CD4-positive, alpha-beta T cell (primary cell): ENCODE measurements at regions of chr11 and their contacts with region 1.

Region 1: DNA sequence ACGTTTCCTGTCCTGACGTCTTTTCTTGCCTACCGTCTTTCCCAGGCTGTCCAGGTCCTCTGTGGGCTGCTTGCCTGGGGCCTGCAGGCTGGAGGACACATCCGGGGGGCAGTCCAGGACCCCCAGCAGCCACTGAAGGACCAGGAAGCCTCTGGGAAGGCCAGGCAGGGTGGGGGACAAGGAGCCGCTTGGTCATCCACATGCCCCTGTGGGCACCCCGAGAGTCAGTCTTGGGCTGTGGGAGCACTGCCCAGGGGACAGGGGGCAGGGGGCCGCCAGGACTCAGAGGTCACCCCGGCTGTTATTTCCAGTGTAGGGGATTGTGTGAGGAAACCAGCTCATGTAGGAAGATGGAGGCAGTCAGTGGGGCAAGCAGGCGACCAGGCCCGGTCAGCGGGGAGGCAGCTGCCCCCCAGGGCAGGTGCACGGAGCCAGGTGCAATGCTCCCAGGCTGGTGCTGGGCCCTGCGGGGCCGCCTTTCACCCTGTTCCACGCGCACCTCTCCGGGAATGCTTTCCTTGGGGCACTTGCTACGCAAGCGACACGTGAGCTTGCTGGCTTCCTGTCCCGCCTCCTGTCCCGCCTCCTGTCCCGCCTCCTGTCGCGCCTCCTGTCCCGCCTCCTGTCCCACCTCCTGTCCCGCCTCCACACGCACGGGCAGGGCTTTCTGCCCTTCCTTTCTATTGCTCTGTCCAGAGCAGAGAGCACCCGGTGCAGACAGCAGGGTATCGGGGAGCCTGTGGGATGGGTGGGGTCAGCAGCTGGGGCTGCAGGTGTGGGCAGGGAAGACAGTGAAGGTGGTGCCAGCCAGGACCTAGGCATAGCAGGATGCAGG is 39.5 kb downstream of the MUC5B start:
- DNase-seq: peak; percentile 79 to 95 (median 86)
- ATAC-seq: peak; percentile 90
- H3K4me3 ChIP-seq: peak overlapping the region; percentile 62
- H3K4me3 Mint-ChIP-seq: peak overlapping the region; percentile 86
- H3K27ac ChIP-seq: peak overlapping the region; percentile 75 to 80
- H3K27ac Mint-ChIP-seq: peak overlapping the region; percentile 86
- H3K4me1 ChIP-seq: peaks cover 22% of the 10 kb centered on the region
- H3K4me1 Mint-ChIP-seq: peaks cover 12% of the 10 kb centered on the region
- H3K27me3 ChIP-seq: no peaks in the 10 kb centered on the region
- H3K27me3 Mint-ChIP-seq: no peaks in the 10 kb centered on the region
- CTCF ChIP-seq: no peak

Region 2: DNA sequence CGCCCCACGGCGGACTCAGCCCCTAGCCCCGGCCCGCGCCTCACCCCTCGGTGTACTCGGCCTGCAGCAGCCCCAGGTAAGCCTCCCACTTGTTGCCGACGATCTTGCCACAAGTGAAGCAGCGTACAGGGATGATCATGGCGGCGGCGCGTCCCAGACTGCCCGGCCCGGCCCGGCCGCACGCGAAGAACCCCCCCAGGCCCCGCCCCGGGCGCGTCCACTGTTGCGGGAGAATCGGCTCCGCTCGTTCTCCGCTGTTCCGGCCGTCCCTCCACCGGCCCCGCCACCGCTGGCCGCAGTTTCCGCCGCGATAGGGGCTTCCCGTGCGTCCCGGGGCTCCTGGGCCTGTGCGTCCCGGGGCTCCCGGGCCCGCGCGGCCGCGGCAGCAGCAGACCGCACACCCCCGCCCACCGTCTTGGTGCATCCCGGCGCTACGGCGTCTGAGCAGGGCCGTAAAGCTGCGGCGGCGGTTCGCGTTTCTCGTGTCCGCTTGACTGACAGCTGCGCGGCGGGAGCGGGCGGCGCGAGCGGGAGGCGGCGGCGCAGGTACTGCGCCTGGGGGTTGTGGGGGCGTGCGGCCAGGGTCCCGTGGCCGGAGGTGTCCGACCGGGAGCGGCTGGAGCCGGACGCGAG is 419.9 kb before region 1 on chr11 and contains the starts of genes POLR2L and TSPAN4:
- CTCF ChIA-PET with region 1: no interaction called
- POLR2A ChIA-PET with region 1: no interaction called
- intact Hi-C with region 1: loop called in 1 of 2 experiments (anchors 10 kb)
- DNase-seq: peak; percentile 76 to 94 (median 86)
- ATAC-seq: peak; percentile 83
- H3K4me3 ChIP-seq: peak within 1 kb of the TSS; percentile 91
- H3K4me3 Mint-ChIP-seq: peak within 1 kb of the TSS; percentile 87
- H3K27ac ChIP-seq: peak within 1 kb of the TSS in 1 of 2 donors; percentile 50
- H3K27ac Mint-ChIP-seq: peak within 1 kb of the TSS; percentile 55
- H3K4me1 ChIP-seq: peaks cover 43% of the 10 kb centered on the region
- H3K4me1 Mint-ChIP-seq: peaks cover 6% of the 10 kb centered on the region
- H3K27me3 ChIP-seq: peaks cover 0 to 2% of the 10 kb centered on the region in 2 experiments
- H3K27me3 Mint-ChIP-seq: no peaks in the 10 kb centered on the region
- CTCF ChIP-seq: no peak
- total RNA-seq, gene POLR2L: 19.6 to 19.8 TPM
- total RNA-seq, gene TSPAN4: 1.6 to 2.0 TPM

Region 3: GRCh38 chr11:1309498-1310317 is 47.3 kb after region 1 on chr11 and contains the start of gene TOLLIP:
- CTCF ChIA-PET with region 1: no interaction called
- POLR2A ChIA-PET with region 1: interaction called, 21 read pairs
- intact Hi-C with region 1: loop called in 1 of 2 experiments (anchors 1 kb)
- DNase-seq: peak; percentile 93 to 99 (median 98)
- ATAC-seq: peak; percentile 81
- H3K4me3 ChIP-seq: peak within 1 kb of the TSS; percentile 85
- H3K4me3 Mint-ChIP-seq: peak within 1 kb of the TSS; percentile 87
- H3K27ac ChIP-seq: peak within 1 kb of the TSS; percentile 82 to 90
- H3K27ac Mint-ChIP-seq: peak within 1 kb of the TSS; percentile 86
- H3K4me1 ChIP-seq: peaks cover 58% of the 10 kb centered on the region
- H3K4me1 Mint-ChIP-seq: peaks cover 49% of the 10 kb centered on the region
- H3K27me3 ChIP-seq: no peaks in the 10 kb centered on the region
- H3K27me3 Mint-ChIP-seq: no peaks in the 10 kb centered on the region
- CTCF ChIP-seq: peak; percentile 27
- total RNA-seq, gene TOLLIP: 38.9 to 41.0 TPM

Region 4: DNA sequence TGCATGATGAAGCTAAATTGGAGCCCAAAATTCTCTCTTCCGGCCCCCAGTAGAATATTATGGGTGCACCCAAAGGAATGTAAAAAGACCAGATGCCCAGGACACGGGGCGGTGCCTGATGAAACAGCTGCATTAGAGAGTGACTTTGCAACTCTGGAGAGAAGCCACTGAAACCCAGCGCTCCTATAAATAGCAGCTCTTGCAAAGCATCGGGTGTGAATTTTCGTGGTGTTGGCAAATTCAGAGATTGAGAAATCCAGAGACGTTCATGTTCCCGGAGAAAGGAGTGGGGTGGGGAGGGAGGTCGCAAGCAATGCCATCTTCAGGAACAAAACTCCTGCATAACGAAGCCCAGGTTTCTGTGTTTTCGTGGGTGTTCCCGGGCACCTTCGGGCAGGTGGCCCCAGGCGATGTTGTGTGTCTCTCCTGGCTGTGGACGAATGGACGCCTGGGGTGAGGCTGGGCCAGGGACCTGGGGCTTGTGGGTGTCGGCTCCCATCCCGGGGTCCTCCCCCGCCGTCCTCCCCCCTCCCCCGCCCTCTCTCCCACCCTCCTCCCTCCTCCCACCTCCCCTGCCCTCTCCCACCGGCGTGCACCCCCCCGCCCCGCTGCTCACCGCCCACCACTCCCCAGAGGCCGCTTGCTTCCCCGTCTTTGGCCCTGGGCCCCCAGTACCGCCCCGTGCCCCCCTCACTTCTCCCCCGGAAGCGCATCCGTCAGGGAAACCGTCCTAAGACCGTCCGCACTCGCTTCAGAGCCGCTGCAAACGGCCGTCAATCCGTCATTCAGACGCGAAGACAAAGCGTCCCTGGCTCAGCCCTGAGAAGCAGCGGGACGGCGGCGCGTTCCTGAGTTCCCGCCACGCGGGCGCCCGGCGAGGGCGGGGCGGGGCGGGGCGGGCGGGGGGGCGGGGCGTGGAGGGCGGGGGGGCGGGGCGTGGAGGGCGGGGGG is 73.7 kb after region 1 on chr11:
- CTCF ChIA-PET with region 1: no interaction called
- POLR2A ChIA-PET with region 1: no interaction called
- intact Hi-C with region 1: loop called in 1 of 2 experiments (anchors 2 kb)
- DNase-seq: peak in 13 of 14 experiments; percentile 32 to 85 (median 59)
- ATAC-seq: peak; percentile 56
- H3K4me3 ChIP-seq: peak overlapping the region; percentile 59
- H3K4me3 Mint-ChIP-seq: peak overlapping the region; percentile 93
- H3K27ac ChIP-seq: no peak overlapping the region
- H3K27ac Mint-ChIP-seq: peak overlapping the region; percentile 85
- H3K4me1 ChIP-seq: peaks cover 14% of the 10 kb centered on the region
- H3K4me1 Mint-ChIP-seq: peaks cover 22% of the 10 kb centered on the region
- H3K27me3 ChIP-seq: no peaks in the 10 kb centered on the region
- H3K27me3 Mint-ChIP-seq: no peaks in the 10 kb centered on the region
- CTCF ChIP-seq: no peak

Region 5: DNA sequence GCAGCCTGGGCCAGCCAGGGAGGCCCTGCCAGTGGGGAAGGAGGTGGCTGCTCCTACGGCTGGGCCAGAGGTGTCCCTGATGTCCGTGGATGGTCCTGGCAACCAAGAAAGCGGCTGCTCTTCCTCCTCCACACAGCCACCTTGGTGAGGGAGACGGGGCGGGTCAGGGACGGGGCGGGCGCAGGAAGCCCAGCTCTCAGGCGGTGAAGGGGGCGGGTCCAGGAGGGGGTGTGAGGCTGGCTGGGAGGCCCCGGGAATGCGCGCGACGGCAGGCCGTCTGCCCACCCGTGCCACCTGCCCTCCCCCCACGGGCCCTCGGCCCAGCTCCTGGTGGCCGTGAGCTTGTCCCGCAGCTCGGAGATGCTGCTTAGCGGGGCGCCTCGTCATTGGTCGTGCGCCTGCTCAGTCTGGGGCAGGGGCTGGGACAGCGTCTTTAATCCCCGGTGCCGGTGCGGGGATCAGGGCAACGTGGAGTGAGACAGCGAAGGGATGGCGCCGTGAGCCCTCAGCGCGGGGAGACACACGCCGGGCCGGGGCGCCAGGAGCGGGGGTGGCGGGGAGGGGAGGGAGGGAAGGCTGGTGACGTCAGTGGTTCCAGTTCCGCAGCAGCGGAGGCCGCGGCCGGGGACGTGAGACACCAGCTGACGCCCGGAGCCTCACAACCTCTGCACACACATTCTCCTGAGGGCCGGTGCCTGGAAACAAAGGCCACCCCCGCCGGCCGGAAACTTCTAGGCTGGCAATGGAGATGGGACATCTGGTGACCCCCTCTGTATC is 120.6 kb after region 1 on chr11:
- CTCF ChIA-PET with region 1: no interaction called
- POLR2A ChIA-PET with region 1: no interaction called
- intact Hi-C with region 1: loop called in 1 of 2 experiments (anchors 1 kb)
- DNase-seq: peak; percentile 54 to 92 (median 71)
- ATAC-seq: peak; percentile 77
- H3K4me3 ChIP-seq: peak overlapping the region; percentile 63
- H3K4me3 Mint-ChIP-seq: peak overlapping the region; percentile 87
- H3K27ac ChIP-seq: peak overlapping the region; percentile 74 to 85
- H3K27ac Mint-ChIP-seq: peak overlapping the region; percentile 78
- H3K4me1 ChIP-seq: peaks cover 20% of the 10 kb centered on the region
- H3K4me1 Mint-ChIP-seq: peaks cover 6% of the 10 kb centered on the region
- H3K27me3 ChIP-seq: no peaks in the 10 kb centered on the region
- H3K27me3 Mint-ChIP-seq: no peaks in the 10 kb centered on the region
- CTCF ChIP-seq: no peak

Region 6: GRCh38 chr11:1515082-1516060 is 253.0 kb after region 1 on chr11:
- CTCF ChIA-PET with region 1: no interaction called
- POLR2A ChIA-PET with region 1: no interaction called
- intact Hi-C with region 1: loop called in 1 of 2 experiments (anchors 10 kb)
- DNase-seq: peak; percentile 55 to 83 (median 68)
- ATAC-seq: peak; percentile 80
- H3K4me3 ChIP-seq: no peak overlapping the region
- H3K4me3 Mint-ChIP-seq: peak overlapping the region; percentile 42
- H3K27ac ChIP-seq: no peak overlapping the region
- H3K27ac Mint-ChIP-seq: peak overlapping the region; percentile 29
- H3K4me1 ChIP-seq: peaks cover 70% of the 10 kb centered on the region
- H3K4me1 Mint-ChIP-seq: peaks cover 66% of the 10 kb centered on the region
- H3K27me3 ChIP-seq: no peaks in the 10 kb centered on the region
- H3K27me3 Mint-ChIP-seq: no peaks in the 10 kb centered on the region
- CTCF ChIP-seq: peak; percentile 84

Region 7: GRCh38 chr11:2377511-2378443 is 1115.4 kb after region 1 on chr11:
- CTCF ChIA-PET with region 1: no interaction called
- POLR2A ChIA-PET with region 1: no interaction called
- intact Hi-C with region 1: loop called in 1 of 2 experiments (anchors 10 kb)
- DNase-seq: peak; percentile 29 to 80 (median 52)
- ATAC-seq: peak; percentile 53
- H3K4me3 ChIP-seq: peak overlapping the region; percentile 90
- H3K4me3 Mint-ChIP-seq: peak overlapping the region; percentile 82
- H3K27ac ChIP-seq: peak overlapping the region; percentile 67 to 73
- H3K27ac Mint-ChIP-seq: peak overlapping the region; percentile 69
- H3K4me1 ChIP-seq: peaks cover 55% of the 10 kb centered on the region
- H3K4me1 Mint-ChIP-seq: peaks cover 32% of the 10 kb centered on the region
- H3K27me3 ChIP-seq: no peaks in the 10 kb centered on the region
- H3K27me3 Mint-ChIP-seq: no peaks in the 10 kb centered on the region
- CTCF ChIP-seq: no peak